T-cell (primary cell): ENCODE measurements at regions of chr14 and their contacts with region 1.

Region 1: DNA sequence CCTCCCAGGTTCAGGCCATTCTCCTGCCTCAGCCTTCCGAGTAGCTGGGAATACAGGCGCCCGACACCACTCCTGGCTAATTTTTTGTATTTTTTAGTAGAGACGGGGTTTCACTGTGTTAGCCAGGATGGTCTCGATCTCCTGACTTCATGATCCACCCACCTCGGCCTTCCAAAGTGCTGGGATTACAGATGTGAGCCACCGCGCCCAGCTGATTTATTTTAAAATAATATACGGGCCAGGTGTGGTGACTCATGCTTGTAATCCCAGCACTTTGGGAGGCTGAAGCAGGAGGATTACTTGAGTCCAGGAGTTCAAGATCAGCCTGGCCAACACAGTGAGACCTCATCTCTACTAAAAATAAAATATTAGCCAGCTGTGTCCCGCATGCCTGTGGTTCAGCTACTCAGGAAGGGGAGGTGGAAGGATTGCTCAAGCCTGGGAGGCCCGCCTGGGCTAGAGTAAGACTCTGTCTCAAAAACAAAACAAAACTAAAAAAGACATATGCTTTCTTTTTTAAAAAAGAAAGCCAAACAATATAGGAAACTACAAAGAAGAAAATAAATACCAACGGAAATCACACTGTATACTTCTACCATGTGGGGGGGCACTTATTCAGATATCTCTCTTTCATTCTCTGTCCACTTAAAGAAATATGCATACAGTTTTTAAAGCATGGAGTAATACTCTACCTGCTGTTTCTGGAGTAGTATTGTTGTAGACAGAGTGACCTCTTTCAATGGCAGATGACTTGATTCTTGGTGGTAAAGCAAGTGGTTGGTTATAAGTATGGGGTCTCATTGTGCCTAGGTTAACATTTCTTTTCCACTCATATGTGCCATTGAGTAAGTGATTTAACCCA is 930 bp upstream of the MIA2 start:
- DNase-seq: peak in 1 of 35 experiments; percentile 34
- ATAC-seq: no peak
- H3K4me3 ChIP-seq: no peak overlapping the region
- H3K4me3 Mint-ChIP-seq: no peak overlapping the region
- H3K27ac ChIP-seq: peak overlapping the region; percentile 56
- H3K27ac Mint-ChIP-seq: peak overlapping the region; percentile 80 to 83
- H3K4me1 ChIP-seq: peaks cover 6 to 35% of the 10 kb centered on the region in 2 experiments
- H3K4me1 Mint-ChIP-seq: peaks cover 28 to 45% (median 35%) of the 10 kb centered on the region in 3 donors
- H3K27me3 ChIP-seq: no peaks in the 10 kb centered on the region
- H3K27me3 Mint-ChIP-seq: no peaks in the 10 kb centered on the region

Region 2: DNA sequence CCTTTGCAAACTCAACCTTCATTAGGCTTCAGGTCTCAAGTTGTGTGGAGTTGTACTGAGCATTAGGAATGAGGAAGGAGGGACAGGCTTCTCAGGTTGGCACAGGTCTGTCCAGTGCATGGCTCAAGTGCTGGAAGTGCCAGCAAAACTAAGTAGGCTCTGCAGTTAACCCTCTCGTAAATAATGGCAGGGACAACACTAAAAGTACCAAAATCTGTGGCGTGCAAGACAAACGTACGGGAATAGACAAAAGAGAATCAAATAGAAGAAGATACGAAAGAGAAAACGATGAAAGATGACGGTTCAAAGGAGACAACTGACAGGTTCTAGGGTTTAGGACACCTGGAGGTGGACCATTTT is 63.3 kb before region 1 on chr14:
- CTCF ChIA-PET with region 1: no interaction called
- POLR2A ChIA-PET with region 1: interaction called in 1 of 2 experiments, 10 read pairs
- DNase-seq: no peak
- ATAC-seq: no peak
- H3K4me3 ChIP-seq: peak overlapping the region; percentile 89 to 98
- H3K4me3 Mint-ChIP-seq: peak overlapping the region; percentile 94 to 98 (median 96)
- H3K27ac ChIP-seq: peak overlapping the region; percentile 86
- H3K27ac Mint-ChIP-seq: peak overlapping the region; percentile 97
- H3K4me1 ChIP-seq: peaks cover 19 to 26% of the 10 kb centered on the region in 2 experiments
- H3K4me1 Mint-ChIP-seq: peaks cover 45 to 56% (median 54%) of the 10 kb centered on the region in 3 donors
- H3K27me3 ChIP-seq: no peaks in the 10 kb centered on the region
- H3K27me3 Mint-ChIP-seq: no peaks in the 10 kb centered on the region

Region 3: GRCh38 chr14:39322807-39323206 is 90.0 kb after region 1 on chr14:
- CTCF ChIA-PET with region 1: no interaction called
- POLR2A ChIA-PET with region 1: no interaction called
- DNase-seq: no peak
- ATAC-seq: no peak
- H3K4me3 ChIP-seq: no peak overlapping the region
- H3K4me3 Mint-ChIP-seq: no peak overlapping the region
- H3K27ac ChIP-seq: no peak overlapping the region
- H3K27ac Mint-ChIP-seq: peak overlapping the region in 1 of 2 donors; percentile 46
- H3K4me1 ChIP-seq: no peaks in the 10 kb centered on the region
- H3K4me1 Mint-ChIP-seq: no peaks in the 10 kb centered on the region
- H3K27me3 ChIP-seq: no peaks in the 10 kb centered on the region
- H3K27me3 Mint-ChIP-seq: no peaks in the 10 kb centered on the region

Region 4: GRCh38 chr14:39426605-39427004 is 193.8 kb after region 1 on chr14:
- CTCF ChIA-PET with region 1: interaction called in 1 of 2 experiments, 10 read pairs
- POLR2A ChIA-PET with region 1: interaction called in 1 of 2 experiments, 3 read pairs
- DNase-seq: peak in 1 of 35 experiments; percentile 40
- ATAC-seq: peak in 1 of 4 experiments; percentile 21
- H3K4me3 ChIP-seq: no peak overlapping the region
- H3K4me3 Mint-ChIP-seq: peak overlapping the region; percentile 0 to 24 (median 14)
- H3K27ac ChIP-seq: no peak overlapping the region
- H3K27ac Mint-ChIP-seq: peak overlapping the region; percentile 0 to 36
- H3K4me1 ChIP-seq: peaks cover 29 to 30% of the 10 kb centered on the region in 2 experiments
- H3K4me1 Mint-ChIP-seq: peaks cover 81 to 88% (median 87%) of the 10 kb centered on the region in 3 donors
- H3K27me3 ChIP-seq: no peaks in the 10 kb centered on the region
- H3K27me3 Mint-ChIP-seq: no peaks in the 10 kb centered on the region